Activated naive CD8-positive, alpha-beta T cell treated with anti-CD3 and anti-CD28 coated beads, Interleukin-2, amount 10 ng/mL, durations not matched to agents 7 days and 5 days (primary cell): ENCODE measurements at regions of chr3 and their contacts with region 1.

Region 1: GRCh38 chr3:51941798-51942602 is at the starts of genes PARP3 and RRP9:
- DNase-seq: peak; percentile 99
- ATAC-seq: peak; percentile 94
- H3K4me3 Mint-ChIP-seq: peak within 1 kb of the TSS; percentile 91
- H3K27ac Mint-ChIP-seq: peak within 1 kb of the TSS; percentile 97
- H3K4me1 Mint-ChIP-seq: peaks cover 36% of the 10 kb centered on the region
- H3K27me3 Mint-ChIP-seq: no peaks in the 10 kb centered on the region
- total RNA-seq, gene PARP3: 23.5 to 26.1 TPM
- total RNA-seq, gene RRP9: 17.7 to 19.2 TPM

Region 2: GRCh38 chr3:51830836-51831385 is 111.1 kb before region 1 on chr3:
- POLR2A ChIA-PET with region 1: no interaction called
- DNase-seq: no peak
- ATAC-seq: no peak
- H3K4me3 Mint-ChIP-seq: no peak overlapping the region
- H3K27ac Mint-ChIP-seq: no peak overlapping the region
- H3K4me1 Mint-ChIP-seq: no peaks in the 10 kb centered on the region
- H3K27me3 Mint-ChIP-seq: peaks cover 30% of the 10 kb centered on the region

Region 3: GRCh38 chr3:51967384-51968169 is 25.6 kb after region 1 on chr3 and contains the start of gene PCBP4:
- POLR2A ChIA-PET with region 1: interaction called, 41 read pairs
- DNase-seq: peak; percentile 67
- ATAC-seq: peak; percentile 66
- H3K4me3 Mint-ChIP-seq: peak within 1 kb of the TSS; percentile 86
- H3K27ac Mint-ChIP-seq: peak within 1 kb of the TSS; percentile 67
- H3K4me1 Mint-ChIP-seq: peaks cover 9% of the 10 kb centered on the region
- H3K27me3 Mint-ChIP-seq: peaks cover 4% of the 10 kb centered on the region
- total RNA-seq, gene PCBP4: 17.8 to 18.2 TPM

Region 4: GRCh38 chr3:51974963-51975851 is 33.2 kb after region 1 on chr3 and contains the start of gene ABHD14A:
- POLR2A ChIA-PET with region 1: interaction called, 41 read pairs
- DNase-seq: peak; percentile 83
- ATAC-seq: peak; percentile 75
- H3K4me3 Mint-ChIP-seq: peak within 1 kb of the TSS; percentile 89
- H3K27ac Mint-ChIP-seq: peak within 1 kb of the TSS; percentile 90
- H3K4me1 Mint-ChIP-seq: peaks cover 29% of the 10 kb centered on the region
- H3K27me3 Mint-ChIP-seq: no peaks in the 10 kb centered on the region
- total RNA-seq, gene ABHD14A: 11.3 to 15.9 TPM

Region 5: GRCh38 chr3:51982782-51983577 is 41.0 kb after region 1 on chr3 and contains the start of gene ACY1:
- POLR2A ChIA-PET with region 1: interaction called, 18 read pairs
- DNase-seq: peak; percentile 84
- ATAC-seq: peak; percentile 80
- H3K4me3 Mint-ChIP-seq: peak within 1 kb of the TSS; percentile 94
- H3K27ac Mint-ChIP-seq: peak within 1 kb of the TSS; percentile 87
- H3K4me1 Mint-ChIP-seq: peaks cover 15% of the 10 kb centered on the region
- H3K27me3 Mint-ChIP-seq: no peaks in the 10 kb centered on the region
- total RNA-seq, gene ACY1: 15.8 to 17.1 TPM

Region 6: GRCh38 chr3:51995346-51996163 is 53.6 kb after region 1 on chr3 and contains the start of gene RPL29:
- POLR2A ChIA-PET with region 1: interaction called, 25 read pairs
- DNase-seq: peak; percentile 85
- ATAC-seq: peak; percentile 91
- H3K4me3 Mint-ChIP-seq: peak within 1 kb of the TSS; percentile 100
- H3K27ac Mint-ChIP-seq: peak within 1 kb of the TSS; percentile 100
- H3K4me1 Mint-ChIP-seq: peaks cover 29% of the 10 kb centered on the region
- H3K27me3 Mint-ChIP-seq: peaks cover 19% of the 10 kb centered on the region
- total RNA-seq, gene RPL29: 1,076 to 1,089 TPM